ENCODE measurements at regions of chr1 and their contacts with region 1.

Region 1: DNA sequence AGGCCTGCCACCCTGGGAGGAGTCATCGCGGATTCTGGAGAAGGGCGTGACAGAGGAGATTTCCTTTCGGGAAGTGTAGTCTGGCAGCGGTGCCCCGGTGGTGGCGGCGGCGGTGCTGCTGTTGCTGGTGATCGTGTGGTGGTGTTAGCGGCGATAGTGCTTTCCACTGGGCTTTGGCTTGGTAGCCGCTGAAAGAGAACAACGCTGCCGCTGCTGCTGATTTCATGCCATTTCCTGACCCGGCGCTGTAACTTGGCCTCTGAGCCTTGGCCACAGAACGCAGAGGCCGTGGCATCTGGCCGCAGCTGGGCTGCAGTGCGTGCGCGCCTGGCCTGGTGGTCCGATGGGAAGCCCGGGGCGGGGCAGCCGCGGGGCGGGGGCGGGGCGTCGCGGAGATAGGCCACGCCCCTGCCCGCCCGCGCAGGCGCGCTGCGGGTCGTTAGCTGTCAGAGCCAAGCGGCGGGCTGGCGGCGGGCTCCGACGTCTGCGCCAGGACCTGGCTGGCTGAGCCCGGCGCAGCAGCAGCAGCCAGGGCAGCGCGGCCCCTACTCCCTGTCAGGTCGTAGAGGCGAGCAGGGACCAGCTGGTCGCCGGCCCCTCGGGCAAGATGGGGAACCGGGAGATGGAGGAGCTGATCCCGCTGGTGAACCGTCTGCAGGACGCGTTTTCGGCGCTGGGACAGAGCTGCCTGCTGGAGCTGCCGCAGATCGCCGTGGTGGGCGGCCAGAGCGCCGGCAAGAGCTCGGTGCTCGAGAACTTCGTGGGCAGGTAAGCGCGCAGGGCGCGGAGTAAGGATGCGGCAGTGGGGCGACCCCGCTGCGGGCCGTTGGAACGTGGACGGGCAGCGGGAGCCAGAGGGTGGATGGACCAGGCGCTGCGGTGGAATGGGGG is at the start of gene DNM3:
- DNase-seq: peak; percentile 81
- H3K4me3 Mint-ChIP-seq: peak within 1 kb of the TSS; percentile 87
- H3K27ac Mint-ChIP-seq: peak within 1 kb of the TSS; percentile 72
- H3K4me1 Mint-ChIP-seq: peaks cover 18% of the 10 kb centered on the region
- H3K27me3 Mint-ChIP-seq: peaks cover 37% of the 10 kb centered on the region
- total RNA-seq, gene DNM3: 0.62 and 0.64 TPM in 2 replicates

Region 2: DNA sequence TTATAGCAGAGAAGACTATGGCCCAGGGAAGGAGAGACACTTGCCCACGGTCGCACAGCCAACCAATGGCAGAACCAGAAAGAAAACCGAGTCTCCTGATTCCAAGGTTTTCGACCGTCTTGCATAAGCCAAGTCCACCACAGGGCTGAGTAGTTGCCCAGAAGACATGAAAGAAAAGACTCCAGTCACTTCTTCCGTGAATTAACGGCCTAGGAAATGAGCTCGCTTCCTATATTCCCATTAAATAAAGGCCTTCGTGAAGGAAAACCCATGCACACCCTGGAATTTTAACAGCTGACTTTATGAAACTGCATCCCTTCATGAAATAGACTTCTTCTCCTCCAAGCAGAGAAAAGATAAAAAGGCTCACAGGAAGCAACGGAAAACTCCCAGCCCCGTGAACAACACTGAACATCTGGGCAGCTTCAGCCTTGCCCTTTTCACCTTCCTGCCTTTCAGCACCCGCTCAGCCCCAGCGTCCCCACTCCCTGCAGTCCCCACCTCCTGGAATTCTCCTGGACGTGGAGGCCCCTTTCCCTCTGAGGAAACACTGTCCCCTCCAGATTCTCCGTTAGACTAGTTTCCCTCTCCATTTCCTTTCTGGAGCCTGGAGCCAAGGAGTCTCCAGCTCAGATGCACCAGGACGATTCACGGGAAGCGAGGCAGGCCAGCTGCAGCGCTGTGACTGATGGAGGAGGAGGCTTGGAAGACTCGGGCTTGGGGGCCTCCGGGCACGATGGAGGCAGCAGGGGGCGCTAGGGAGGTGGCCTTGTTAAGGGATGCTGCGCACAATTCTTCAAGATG is 186.2 kb before region 1 on chr1:
- intact Hi-C with region 1: loop called (anchors 5 kb)
- DNase-seq: peak; percentile 54
- H3K4me3 Mint-ChIP-seq: peak overlapping the region; percentile 60
- H3K27ac Mint-ChIP-seq: no peak overlapping the region
- H3K4me1 Mint-ChIP-seq: peaks cover 13% of the 10 kb centered on the region
- H3K27me3 Mint-ChIP-seq: peaks cover 25% of the 10 kb centered on the region

Region 3: DNA sequence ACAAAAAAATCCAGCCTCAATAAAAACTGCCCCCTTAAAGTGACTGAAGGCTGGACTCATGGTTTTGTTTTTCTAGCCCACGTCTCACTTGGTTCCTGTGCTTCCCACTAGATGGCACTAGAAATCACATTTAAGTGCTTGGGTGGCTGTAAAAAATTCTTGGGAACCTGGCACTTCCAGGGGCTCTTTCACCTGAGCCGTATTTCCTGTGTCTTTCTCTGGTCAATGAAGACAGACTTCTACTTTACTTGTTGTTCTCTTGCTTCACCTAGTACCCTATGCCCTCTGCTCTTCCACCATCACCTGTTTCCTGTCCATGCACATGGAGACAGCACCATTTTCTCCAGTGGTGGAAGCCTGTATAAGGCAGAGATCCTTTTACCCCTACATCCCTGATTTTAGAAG is 39.8 kb before region 1 on chr1:
- intact Hi-C with region 1: loop called (anchors 5 kb)
- DNase-seq: no peak
- H3K4me3 Mint-ChIP-seq: no peak overlapping the region
- H3K27ac Mint-ChIP-seq: no peak overlapping the region
- H3K4me1 Mint-ChIP-seq: peaks cover 17% of the 10 kb centered on the region
- H3K27me3 Mint-ChIP-seq: no peaks in the 10 kb centered on the region

Region 4: DNA sequence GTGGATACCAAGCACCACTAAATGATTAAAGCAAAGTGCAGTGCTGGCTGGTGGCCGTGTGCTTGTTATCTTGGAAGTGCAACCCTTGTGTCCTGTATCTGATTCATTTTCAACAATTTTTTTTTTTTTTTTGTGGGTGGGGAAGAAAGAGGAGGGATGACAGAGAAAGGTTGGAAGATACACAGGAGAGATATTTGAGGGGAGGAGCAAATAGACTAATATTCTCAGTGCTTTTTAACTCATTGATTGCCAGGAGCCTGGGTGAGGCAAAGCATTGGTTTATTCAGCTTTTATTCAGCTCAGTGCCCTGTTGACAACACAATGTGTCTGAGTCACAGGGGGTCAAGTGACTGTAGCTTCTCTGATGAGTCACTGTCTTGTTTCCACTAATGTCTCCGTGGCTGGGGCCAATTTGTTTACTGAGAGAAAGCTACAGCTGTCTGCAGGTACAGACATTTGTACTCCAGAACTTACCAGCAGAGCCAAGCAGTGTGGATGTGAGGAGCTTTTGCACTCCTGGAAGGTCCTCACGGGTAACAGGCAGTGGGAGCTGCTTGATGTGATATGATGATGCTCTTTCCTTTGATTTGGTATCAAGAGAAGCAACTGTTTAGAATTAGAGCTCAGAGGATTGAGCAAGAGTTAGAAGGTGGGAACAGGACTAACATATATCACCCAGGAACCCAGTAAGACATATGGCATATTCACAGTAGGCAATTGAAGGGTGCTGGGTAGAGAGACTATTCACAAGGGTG is 23.6 kb before region 1 on chr1:
- intact Hi-C with region 1: loop called (anchors 1 kb)
- DNase-seq: peak; percentile 31
- H3K4me3 Mint-ChIP-seq: peak overlapping the region; percentile 61
- H3K27ac Mint-ChIP-seq: peak overlapping the region; percentile 90
- H3K4me1 Mint-ChIP-seq: peaks cover 31% of the 10 kb centered on the region
- H3K27me3 Mint-ChIP-seq: no peaks in the 10 kb centered on the region

Region 5: GRCh38 chr1:171883849-171884248 is 42.6 kb after region 1 on chr1:
- intact Hi-C with region 1: loop called (anchors 2 kb)
- DNase-seq: no peak
- H3K4me3 Mint-ChIP-seq: no peak overlapping the region
- H3K27ac Mint-ChIP-seq: no peak overlapping the region
- H3K4me1 Mint-ChIP-seq: peaks cover 13% of the 10 kb centered on the region
- H3K27me3 Mint-ChIP-seq: no peaks in the 10 kb centered on the region